ENCODE measurements at regions of chr21 and their contacts with region 1.

Region 1: DNA sequence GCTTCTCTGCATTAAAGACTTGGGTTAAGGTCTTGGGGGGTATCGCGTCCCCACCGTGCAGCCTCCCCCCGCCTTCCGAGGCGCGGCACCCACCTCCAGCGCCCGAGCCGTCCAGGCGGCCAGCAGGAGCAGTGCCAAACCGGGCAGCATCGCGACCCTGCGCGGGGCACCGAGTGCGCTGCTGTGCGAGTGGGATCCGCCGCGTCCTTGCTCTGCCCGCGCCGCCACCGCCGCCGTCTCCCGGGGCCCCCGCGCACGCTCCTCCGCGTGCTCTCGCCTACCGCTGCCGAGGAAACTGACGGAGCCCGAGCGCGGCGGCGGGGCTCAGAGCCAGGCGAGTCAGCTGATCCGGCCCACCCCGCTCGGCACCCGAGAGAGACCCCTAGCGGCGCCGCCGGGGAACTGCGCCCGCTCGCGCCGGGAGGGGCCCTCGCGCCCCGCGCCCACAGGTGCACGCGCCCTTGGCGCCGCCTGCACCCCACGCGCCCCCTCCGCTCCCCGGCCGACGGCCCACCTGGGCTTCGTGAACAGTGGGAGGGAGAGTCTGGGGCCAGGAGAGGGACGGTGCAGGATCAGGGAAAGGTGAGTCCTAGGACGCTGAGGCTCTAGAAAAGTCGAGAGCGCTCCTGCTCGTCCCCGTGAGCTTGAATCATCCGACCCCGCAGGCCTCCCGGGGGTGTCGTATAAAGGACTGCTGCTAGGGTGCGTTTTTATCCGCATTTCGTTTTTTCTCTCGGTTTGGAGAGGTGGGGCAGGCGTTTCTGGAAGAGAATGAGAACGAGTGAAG is at the start of gene APP:
- DNase-seq: peak; percentile 77
- H3K4me3 Mint-ChIP-seq: peak within 1 kb of the TSS; percentile 96
- H3K27ac Mint-ChIP-seq: peak within 1 kb of the TSS; percentile 85
- H3K4me1 Mint-ChIP-seq: peaks cover 24% of the 10 kb centered on the region
- H3K27me3 Mint-ChIP-seq: no peaks in the 10 kb centered on the region
- CTCF ChIP-seq: peak; percentile 97
- total RNA-seq, gene APP: 459 and 472 TPM in 2 replicates

Region 2: GRCh38 chr21:25790122-25790877 is 380.4 kb before region 1 on chr21:
- CTCF ChIA-PET with region 1: no interaction called
- POLR2A ChIA-PET with region 1: no interaction called
- intact Hi-C with region 1: loop called (anchors 10 kb)
- DNase-seq: peak; percentile 49
- H3K4me3 Mint-ChIP-seq: peak overlapping the region; percentile 64
- H3K27ac Mint-ChIP-seq: no peak overlapping the region
- H3K4me1 Mint-ChIP-seq: peaks cover 6% of the 10 kb centered on the region
- H3K27me3 Mint-ChIP-seq: peaks cover 24% of the 10 kb centered on the region
- CTCF ChIP-seq: peak; percentile 44

Region 3: GRCh38 chr21:25963181-25963580 is 207.5 kb before region 1 on chr21:
- CTCF ChIA-PET with region 1: no interaction called
- POLR2A ChIA-PET with region 1: interaction called, 4 read pairs
- intact Hi-C with region 1: loop called (anchors 5 kb)
- DNase-seq: peak; percentile 88
- H3K4me3 Mint-ChIP-seq: peak overlapping the region; percentile 25
- H3K27ac Mint-ChIP-seq: peak overlapping the region; percentile 71
- H3K4me1 Mint-ChIP-seq: peaks cover 32% of the 10 kb centered on the region
- H3K27me3 Mint-ChIP-seq: no peaks in the 10 kb centered on the region
- CTCF ChIP-seq: no peak

Region 4: GRCh38 chr21:26087223-26087918 is 83.3 kb before region 1 on chr21:
- CTCF ChIA-PET with region 1: no interaction called
- POLR2A ChIA-PET with region 1: no interaction called
- intact Hi-C with region 1: no loop called
- DNase-seq: no peak
- H3K4me3 Mint-ChIP-seq: no peak overlapping the region
- H3K27ac Mint-ChIP-seq: no peak overlapping the region
- H3K4me1 Mint-ChIP-seq: peaks cover 7% of the 10 kb centered on the region
- H3K27me3 Mint-ChIP-seq: no peaks in the 10 kb centered on the region
- CTCF ChIP-seq: no peak

Region 5: GRCh38 chr21:26124421-26124833 is 46.2 kb before region 1 on chr21:
- CTCF ChIA-PET with region 1: interaction called, 9 read pairs
- POLR2A ChIA-PET with region 1: interaction called, 260 read pairs
- intact Hi-C with region 1: no loop called
- DNase-seq: peak; percentile 41
- H3K4me3 Mint-ChIP-seq: peak overlapping the region; percentile 26
- H3K27ac Mint-ChIP-seq: peak overlapping the region; percentile 84
- H3K4me1 Mint-ChIP-seq: peaks cover 63% of the 10 kb centered on the region
- H3K27me3 Mint-ChIP-seq: no peaks in the 10 kb centered on the region
- CTCF ChIP-seq: no peak

Region 6: DNA sequence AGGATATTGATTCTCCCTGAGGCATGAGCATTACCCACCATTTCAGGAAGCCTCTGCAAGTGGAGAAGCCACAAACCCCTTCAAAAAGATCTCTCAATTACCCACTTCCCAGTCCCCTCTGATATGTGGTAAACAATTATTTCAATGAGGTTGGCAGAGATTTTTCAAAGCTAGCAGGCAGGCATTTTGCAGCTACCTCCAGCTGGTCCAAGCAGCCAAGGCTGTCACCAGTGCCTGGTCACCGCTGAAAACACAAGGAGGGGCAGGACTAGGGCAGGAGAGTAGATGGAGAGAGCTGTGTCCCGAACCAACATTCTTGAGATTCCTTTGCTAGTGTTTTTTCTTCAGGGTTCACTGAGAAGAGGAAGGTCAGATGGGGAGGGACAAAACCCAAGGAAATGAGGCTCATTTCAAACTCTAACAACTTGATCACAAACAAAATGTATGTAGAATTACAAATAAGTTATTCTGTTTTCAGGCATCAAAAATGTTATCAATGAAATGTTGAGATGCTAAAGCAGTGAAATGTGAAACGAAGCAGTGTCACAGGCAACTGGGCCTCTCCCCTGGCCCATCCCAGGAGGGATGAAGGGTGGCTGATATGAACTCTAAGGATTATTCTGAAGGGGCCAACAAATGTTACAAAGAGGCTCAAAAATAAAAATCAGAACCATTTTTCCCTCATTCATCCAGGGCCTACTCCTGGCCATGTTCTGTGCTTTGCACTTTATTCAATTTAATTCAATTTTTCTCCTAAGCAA is 22.4 kb before region 1 on chr21:
- CTCF ChIA-PET with region 1: interaction called, 5 read pairs
- POLR2A ChIA-PET with region 1: interaction called, 64 read pairs
- intact Hi-C with region 1: no loop called
- DNase-seq: no peak
- H3K4me3 Mint-ChIP-seq: no peak overlapping the region
- H3K27ac Mint-ChIP-seq: peak overlapping the region; percentile 91
- H3K4me1 Mint-ChIP-seq: peaks cover 13% of the 10 kb centered on the region
- H3K27me3 Mint-ChIP-seq: no peaks in the 10 kb centered on the region
- CTCF ChIP-seq: no peak

Region 7: DNA sequence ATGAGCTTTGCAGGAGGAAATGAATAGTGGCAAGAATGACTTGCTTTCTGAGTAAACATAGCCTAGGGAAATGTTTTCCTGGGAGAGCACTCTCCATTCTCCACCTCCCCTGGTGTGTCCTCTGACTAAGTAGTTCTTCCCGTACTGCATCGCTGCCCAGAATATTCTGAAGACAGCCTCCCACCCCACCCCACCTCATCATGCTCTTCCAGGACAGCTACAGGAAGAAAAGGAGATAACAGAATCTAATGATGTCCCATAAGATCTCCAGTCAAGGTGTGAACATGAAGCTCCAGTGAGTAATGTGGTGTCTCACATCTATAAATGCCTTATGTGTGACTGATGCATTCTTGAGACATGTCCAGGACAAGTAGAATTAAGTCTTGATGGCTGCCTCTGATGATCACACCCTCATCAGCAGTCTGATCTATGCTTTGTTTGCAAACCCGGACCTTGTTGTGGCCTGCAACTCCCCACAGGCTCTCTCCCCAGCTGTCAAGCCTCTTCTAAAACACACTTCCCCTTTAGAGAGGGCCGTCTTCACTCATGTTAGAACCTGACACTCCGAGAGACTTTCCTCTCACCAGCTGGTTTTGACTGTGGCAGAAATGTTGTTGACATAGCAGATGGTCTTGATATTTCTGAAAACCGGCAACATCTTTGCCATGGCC is 219.4 kb after region 1 on chr21:
- CTCF ChIA-PET with region 1: interaction called, 4 read pairs
- POLR2A ChIA-PET with region 1: interaction called, 29 read pairs
- intact Hi-C with region 1: no loop called
- DNase-seq: peak; percentile 75
- H3K4me3 Mint-ChIP-seq: peak overlapping the region; percentile 28
- H3K27ac Mint-ChIP-seq: peak overlapping the region; percentile 93
- H3K4me1 Mint-ChIP-seq: peaks cover 48% of the 10 kb centered on the region
- H3K27me3 Mint-ChIP-seq: no peaks in the 10 kb centered on the region
- CTCF ChIP-seq: no peak

Region 8: GRCh38 chr21:26715878-26716506 is 545.3 kb after region 1 on chr21:
- CTCF ChIA-PET with region 1: interaction called, 8 read pairs
- POLR2A ChIA-PET with region 1: interaction called, 6 read pairs
- intact Hi-C with region 1: loop called (anchors 1 kb)
- DNase-seq: peak; percentile 69
- H3K4me3 Mint-ChIP-seq: no peak overlapping the region
- H3K27ac Mint-ChIP-seq: no peak overlapping the region
- H3K4me1 Mint-ChIP-seq: no peaks in the 10 kb centered on the region
- H3K27me3 Mint-ChIP-seq: no peaks in the 10 kb centered on the region
- CTCF ChIP-seq: peak; percentile 70